B cell (primary cell): ENCODE measurements at regions of chr17 and their contacts with region 1.

Region 1: GRCh38 chr17:68457539-68458259 is 403 bp upstream of the WIPI1 start:
- DNase-seq: peak; percentile 99
- ATAC-seq: peak; percentile 97
- H3K4me3 ChIP-seq: peak overlapping the region; percentile 55 to 67 (median 63)
- H3K4me3 Mint-ChIP-seq: peak overlapping the region; percentile 82
- H3K27ac ChIP-seq: peak overlapping the region; percentile 56 to 75
- H3K27ac Mint-ChIP-seq: peak overlapping the region; percentile 65
- H3K4me1 ChIP-seq: peaks cover 10 to 18% of the 10 kb centered on the region in 2 donors
- H3K4me1 Mint-ChIP-seq: peaks cover 20% of the 10 kb centered on the region
- H3K27me3 ChIP-seq: no peaks in the 10 kb centered on the region
- H3K27me3 Mint-ChIP-seq: no peaks in the 10 kb centered on the region
- CTCF ChIP-seq: no peak

Region 2: DNA sequence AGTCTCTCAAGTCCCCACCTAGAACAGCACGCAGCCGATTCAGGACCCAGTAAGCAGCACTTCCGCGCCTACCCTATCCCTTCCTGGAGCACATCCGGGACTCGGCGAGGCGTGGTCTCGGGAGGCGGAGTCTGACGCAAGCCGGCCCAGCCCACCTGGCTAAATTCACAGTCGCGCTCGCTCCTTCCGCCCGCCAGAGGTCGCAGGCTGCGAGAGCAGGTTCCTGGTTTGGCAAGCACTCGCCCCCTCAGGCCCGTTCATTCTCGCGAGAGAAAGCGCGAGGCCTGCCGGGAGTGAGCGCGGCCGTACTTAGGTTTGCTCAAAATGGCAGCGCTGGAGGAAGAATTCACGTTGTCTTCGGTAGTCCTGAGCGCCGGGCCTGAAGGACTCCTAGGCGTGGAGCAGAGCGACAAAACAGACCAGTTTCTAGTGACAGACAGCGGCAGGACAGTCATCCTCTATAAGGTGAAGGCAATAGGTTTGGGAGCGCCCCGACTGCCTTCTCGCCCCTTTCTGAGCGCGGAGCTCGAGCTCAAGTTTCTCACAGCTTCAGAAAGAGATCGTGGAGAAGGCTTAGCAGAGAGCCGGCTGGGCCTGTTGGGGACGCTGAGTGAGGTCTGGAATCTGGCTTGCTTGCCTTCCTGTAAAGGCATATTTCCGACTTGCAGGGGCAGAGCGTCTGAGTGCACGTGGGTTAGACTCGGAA is 739.9 kb before region 1 on chr17 and contains the start of gene NOL11:
- CTCF ChIA-PET with region 1: no interaction called
- POLR2A ChIA-PET with region 1: interaction called, 6 read pairs
- intact Hi-C with region 1: loop called (anchors 1 kb)
- DNase-seq: peak; percentile 100
- ATAC-seq: peak; percentile 95
- H3K4me3 ChIP-seq: peak within 1 kb of the TSS; percentile 70 to 97 (median 91)
- H3K4me3 Mint-ChIP-seq: peak within 1 kb of the TSS; percentile 98
- H3K27ac ChIP-seq: peak within 1 kb of the TSS; percentile 88 to 97
- H3K27ac Mint-ChIP-seq: peak within 1 kb of the TSS; percentile 97
- H3K4me1 ChIP-seq: peaks cover 18 to 21% of the 10 kb centered on the region in 2 donors
- H3K4me1 Mint-ChIP-seq: peaks cover 20% of the 10 kb centered on the region
- H3K27me3 ChIP-seq: no peaks in the 10 kb centered on the region
- H3K27me3 Mint-ChIP-seq: no peaks in the 10 kb centered on the region
- CTCF ChIP-seq: peak; percentile 86
- total RNA-seq, gene NOL11: 59.1 and 59.9 TPM in 2 replicates

Region 3: DNA sequence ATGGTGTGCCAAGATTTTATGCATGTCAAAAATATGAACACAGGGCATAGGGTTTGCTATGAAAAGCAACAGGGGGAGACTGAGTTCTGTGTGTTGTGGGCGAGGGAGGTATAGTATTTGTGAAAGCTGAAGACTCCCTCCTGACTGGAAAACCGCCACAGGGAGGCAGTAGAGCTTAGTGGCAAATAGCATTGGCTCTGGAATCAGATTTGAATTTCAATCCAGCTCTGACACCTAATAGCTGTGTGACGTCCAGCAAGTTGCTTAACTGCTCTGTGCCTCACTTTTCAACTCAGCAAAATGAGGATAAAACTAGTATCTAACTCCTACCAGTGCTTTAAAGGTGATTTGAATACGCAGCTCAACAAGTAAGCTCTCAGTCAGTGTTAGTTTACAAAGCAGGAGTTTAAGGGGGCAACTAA is 400.2 kb before region 1 on chr17:
- CTCF ChIA-PET with region 1: interaction called, 18 read pairs
- POLR2A ChIA-PET with region 1: no interaction called
- intact Hi-C with region 1: no loop called
- DNase-seq: peak; percentile 49
- ATAC-seq: peak; percentile 69
- H3K4me3 ChIP-seq: no peak overlapping the region
- H3K4me3 Mint-ChIP-seq: no peak overlapping the region
- H3K27ac ChIP-seq: no peak overlapping the region
- H3K27ac Mint-ChIP-seq: no peak overlapping the region
- H3K4me1 ChIP-seq: no peaks in the 10 kb centered on the region
- H3K4me1 Mint-ChIP-seq: no peaks in the 10 kb centered on the region
- H3K27me3 ChIP-seq: no peaks in the 10 kb centered on the region
- H3K27me3 Mint-ChIP-seq: no peaks in the 10 kb centered on the region
- CTCF ChIP-seq: peak; percentile 47

Region 4: GRCh38 chr17:68205251-68205807 is 252.4 kb before region 1 on chr17:
- CTCF ChIA-PET with region 1: interaction called, 29 read pairs
- POLR2A ChIA-PET with region 1: interaction called, 4 read pairs
- intact Hi-C with region 1: loop called (anchors 5 kb)
- DNase-seq: peak; percentile 95
- ATAC-seq: peak; percentile 79
- H3K4me3 ChIP-seq: peak overlapping the region in 4 of 5 experiments; percentile 71 to 92 (median 76)
- H3K4me3 Mint-ChIP-seq: peak overlapping the region; percentile 93
- H3K27ac ChIP-seq: peak overlapping the region; percentile 88 to 92
- H3K27ac Mint-ChIP-seq: peak overlapping the region; percentile 96
- H3K4me1 ChIP-seq: peaks cover 25 to 37% of the 10 kb centered on the region in 2 donors
- H3K4me1 Mint-ChIP-seq: peaks cover 39% of the 10 kb centered on the region
- H3K27me3 ChIP-seq: peaks cover 0 to 4% (median under 1%) of the 10 kb centered on the region in 4 experiments
- H3K27me3 Mint-ChIP-seq: no peaks in the 10 kb centered on the region
- CTCF ChIP-seq: peak; percentile 85

Region 5: GRCh38 chr17:68398691-68399637 is 58.7 kb before region 1 on chr17:
- CTCF ChIA-PET with region 1: interaction called, 13 read pairs
- POLR2A ChIA-PET with region 1: no interaction called
- intact Hi-C with region 1: no loop called
- DNase-seq: peak; percentile 55
- ATAC-seq: peak; percentile 76
- H3K4me3 ChIP-seq: no peak overlapping the region
- H3K4me3 Mint-ChIP-seq: peak overlapping the region; percentile 12
- H3K27ac ChIP-seq: no peak overlapping the region
- H3K27ac Mint-ChIP-seq: peak overlapping the region; percentile 35
- H3K4me1 ChIP-seq: peaks cover 0 to 6% of the 10 kb centered on the region in 2 donors
- H3K4me1 Mint-ChIP-seq: peaks cover 8% of the 10 kb centered on the region
- H3K27me3 ChIP-seq: no peaks in the 10 kb centered on the region
- H3K27me3 Mint-ChIP-seq: peaks cover 3% of the 10 kb centered on the region
- CTCF ChIP-seq: peak; percentile 40

Region 6: GRCh38 chr17:68424942-68425386 is 32.7 kb before region 1 on chr17:
- CTCF ChIA-PET with region 1: no interaction called
- POLR2A ChIA-PET with region 1: no interaction called
- intact Hi-C with region 1: no loop called
- DNase-seq: no peak
- ATAC-seq: no peak
- H3K4me3 ChIP-seq: no peak overlapping the region
- H3K4me3 Mint-ChIP-seq: no peak overlapping the region
- H3K27ac ChIP-seq: no peak overlapping the region
- H3K27ac Mint-ChIP-seq: no peak overlapping the region
- H3K4me1 ChIP-seq: no peaks in the 10 kb centered on the region
- H3K4me1 Mint-ChIP-seq: no peaks in the 10 kb centered on the region
- H3K27me3 ChIP-seq: no peaks in the 10 kb centered on the region
- H3K27me3 Mint-ChIP-seq: no peaks in the 10 kb centered on the region
- CTCF ChIP-seq: no peak

Region 7: DNA sequence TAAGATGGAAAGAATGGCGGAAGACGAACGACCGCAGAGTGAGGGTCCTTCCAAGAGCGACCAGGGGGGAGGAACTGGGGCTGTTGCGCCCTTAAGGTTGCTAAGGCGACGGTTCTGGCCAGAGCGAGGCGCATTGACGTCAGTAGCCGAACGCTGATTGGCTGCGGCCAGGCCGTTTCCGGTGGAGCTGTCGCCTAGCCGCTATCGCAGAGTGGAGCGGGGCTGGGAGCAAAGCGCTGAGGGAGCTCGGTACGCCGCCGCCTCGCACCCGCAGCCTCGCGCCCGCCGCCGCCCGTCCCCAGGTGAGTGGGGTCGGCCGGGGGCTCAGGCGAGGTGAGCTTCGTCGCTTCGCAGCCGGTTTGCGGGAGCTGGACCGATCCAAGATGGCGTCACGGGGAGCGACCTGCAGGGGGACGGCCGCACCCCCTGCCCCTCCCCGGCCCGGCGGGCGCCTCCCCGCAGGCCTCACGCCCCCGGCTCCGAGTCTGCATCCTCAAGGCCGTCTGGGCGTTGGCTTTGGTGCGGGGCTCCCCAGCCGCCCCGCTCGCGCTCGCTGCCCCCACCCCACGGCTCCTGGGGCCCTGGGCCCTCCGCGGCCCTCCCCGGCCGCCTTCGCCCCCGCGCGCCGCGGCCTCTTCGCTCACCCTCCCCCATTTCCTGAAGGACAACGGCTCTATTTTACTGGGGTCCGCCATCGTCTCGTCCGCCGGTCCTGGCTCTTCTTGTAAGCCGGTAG is 54.7 kb after region 1 on chr17 and contains the start of gene PRKAR1A:
- CTCF ChIA-PET with region 1: interaction called, 4 read pairs
- POLR2A ChIA-PET with region 1: interaction called, 5 read pairs
- intact Hi-C with region 1: loop called (anchors 1 kb)
- DNase-seq: peak; percentile 98
- ATAC-seq: peak; percentile 75
- H3K4me3 ChIP-seq: peak within 1 kb of the TSS; percentile 62 to 99 (median 85)
- H3K4me3 Mint-ChIP-seq: peak within 1 kb of the TSS; percentile 100
- H3K27ac ChIP-seq: peak within 1 kb of the TSS; percentile 99
- H3K27ac Mint-ChIP-seq: peak within 1 kb of the TSS; percentile 100
- H3K4me1 ChIP-seq: peaks cover 25 to 28% of the 10 kb centered on the region in 2 donors
- H3K4me1 Mint-ChIP-seq: peaks cover 42% of the 10 kb centered on the region
- H3K27me3 ChIP-seq: no peaks in the 10 kb centered on the region
- H3K27me3 Mint-ChIP-seq: no peaks in the 10 kb centered on the region
- CTCF ChIP-seq: no peak
- total RNA-seq, gene PRKAR1A: 296 and 297 TPM in 2 replicates